HAP-1 (cell line): ENCODE measurements at regions of chr20 and their contacts with region 1.

Region 1: DNA sequence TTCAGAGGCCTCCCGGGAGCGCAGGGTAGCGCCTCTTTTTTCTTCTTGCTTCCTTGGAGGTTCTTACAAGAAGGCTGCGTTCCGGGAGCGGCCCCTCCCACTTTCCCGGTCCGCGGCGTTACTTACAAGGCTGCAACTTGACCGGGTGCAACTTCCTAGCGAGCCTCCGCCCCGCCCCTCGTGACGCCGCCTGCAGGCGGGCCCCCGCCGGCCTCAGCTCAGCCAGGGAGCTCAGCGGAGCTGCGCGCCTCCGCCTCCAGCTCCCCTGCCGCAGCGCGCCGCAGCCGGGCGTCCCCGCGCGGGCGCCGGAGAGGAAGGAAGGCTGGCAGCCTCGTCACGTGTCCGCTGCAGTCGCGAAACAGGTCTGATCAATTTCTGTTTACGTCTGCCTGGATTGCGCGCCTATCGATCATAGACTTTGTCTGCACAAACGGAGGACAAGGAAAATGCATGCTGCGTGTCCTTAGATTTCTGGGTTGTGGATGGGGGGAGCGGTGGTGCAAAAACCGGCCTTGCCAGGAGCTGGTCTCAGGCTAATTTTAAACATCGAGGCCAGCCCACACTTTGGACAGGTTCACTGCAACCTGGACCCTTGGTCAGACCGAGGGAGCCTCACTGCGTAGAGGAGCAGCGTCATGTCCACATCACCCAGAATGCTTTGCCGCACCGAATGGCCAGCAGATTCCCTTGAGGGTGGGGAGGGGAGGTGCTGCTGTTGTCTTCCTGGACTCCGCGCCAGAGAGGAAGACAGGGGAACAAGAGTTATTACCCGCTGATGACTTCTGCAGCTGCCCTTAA is at the starts of genes FAM217B and PPP1R3D:
- DNase-seq: peak; percentile 88 to 97
- H3K4me3 ChIP-seq: peak within 1 kb of the TSS; percentile 59
- H3K4me1 ChIP-seq: peaks cover 35% of the 10 kb centered on the region
- H3K27me3 ChIP-seq: no peaks in the 10 kb centered on the region

Region 2: DNA sequence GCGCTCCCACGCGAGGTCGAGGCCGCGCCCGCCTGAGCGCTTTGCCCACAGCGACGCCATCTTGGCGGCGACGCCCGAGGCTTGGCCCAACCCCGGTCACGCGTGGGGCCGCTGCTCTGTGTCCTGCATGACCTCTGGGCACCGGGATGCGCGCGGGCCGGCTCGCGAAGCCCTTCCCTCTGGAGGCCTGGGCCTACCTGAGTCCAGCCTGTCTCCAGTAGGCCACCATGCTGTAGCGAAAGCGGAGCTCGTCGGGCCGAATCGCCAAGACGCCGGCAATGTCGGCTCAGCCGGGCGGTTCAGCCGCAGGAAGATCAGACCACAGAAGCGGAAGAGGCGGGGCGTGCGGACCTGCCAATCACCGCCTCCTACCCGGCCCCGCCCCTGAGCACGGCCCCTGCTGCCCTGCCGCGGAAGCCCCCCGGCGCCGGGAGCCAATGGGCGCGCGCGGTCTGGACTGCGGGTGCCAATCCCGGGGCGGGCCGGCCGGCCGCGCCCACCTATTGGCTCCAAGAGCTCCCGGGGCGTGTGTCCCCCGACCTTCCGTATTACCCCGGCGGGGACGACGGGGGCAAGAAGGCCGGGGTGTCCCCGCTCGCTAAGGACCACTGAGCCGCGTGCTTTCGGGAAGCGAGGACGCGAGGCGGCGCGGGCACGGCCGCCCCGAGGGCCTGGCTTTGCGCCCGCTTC is 908.2 kb before region 1 on chr20 and contains the start of gene ATP5F1E:
- in situ Hi-C with region 1: loop called (anchors 25 kb)
- DNase-seq: peak; percentile 92 to 96
- H3K4me3 ChIP-seq: peak within 1 kb of the TSS; percentile 85
- H3K4me1 ChIP-seq: peaks cover 40% of the 10 kb centered on the region
- H3K27me3 ChIP-seq: no peaks in the 10 kb centered on the region

Region 3: DNA sequence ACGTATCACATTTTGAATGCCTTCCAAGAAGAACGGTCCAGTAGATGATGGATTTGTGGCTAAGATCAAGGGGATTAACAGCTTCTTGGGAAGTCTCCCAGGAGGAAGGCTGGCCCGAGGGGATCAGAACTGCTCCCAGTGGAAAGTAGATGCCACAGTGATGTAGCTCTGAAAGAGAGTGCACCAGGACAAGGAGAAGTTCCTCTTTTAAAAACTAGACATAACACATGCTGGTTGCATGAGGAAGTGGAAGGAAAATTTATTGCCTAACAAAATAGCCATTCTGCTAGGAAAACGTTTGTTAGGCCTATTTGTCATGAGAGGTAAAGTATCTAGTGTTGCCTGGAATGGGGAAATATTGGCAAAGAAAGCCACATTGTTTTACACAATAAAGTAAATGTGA is 105.6 kb after region 1 on chr20:
- in situ Hi-C with region 1: no loop called
- DNase-seq: no peak
- H3K4me3 ChIP-seq: no peak overlapping the region
- H3K4me1 ChIP-seq: no peaks in the 10 kb centered on the region
- H3K27me3 ChIP-seq: no peaks in the 10 kb centered on the region

Region 4: GRCh38 chr20:60206259-60206658 is 265.9 kb after region 1 on chr20:
- in situ Hi-C with region 1: no loop called
- DNase-seq: no peak
- H3K4me3 ChIP-seq: no peak overlapping the region
- H3K4me1 ChIP-seq: no peaks in the 10 kb centered on the region
- H3K27me3 ChIP-seq: no peaks in the 10 kb centered on the region